SK-N-SH (cell line): ENCODE measurements at regions of chr4 and their contacts with region 1.

Region 1: DNA sequence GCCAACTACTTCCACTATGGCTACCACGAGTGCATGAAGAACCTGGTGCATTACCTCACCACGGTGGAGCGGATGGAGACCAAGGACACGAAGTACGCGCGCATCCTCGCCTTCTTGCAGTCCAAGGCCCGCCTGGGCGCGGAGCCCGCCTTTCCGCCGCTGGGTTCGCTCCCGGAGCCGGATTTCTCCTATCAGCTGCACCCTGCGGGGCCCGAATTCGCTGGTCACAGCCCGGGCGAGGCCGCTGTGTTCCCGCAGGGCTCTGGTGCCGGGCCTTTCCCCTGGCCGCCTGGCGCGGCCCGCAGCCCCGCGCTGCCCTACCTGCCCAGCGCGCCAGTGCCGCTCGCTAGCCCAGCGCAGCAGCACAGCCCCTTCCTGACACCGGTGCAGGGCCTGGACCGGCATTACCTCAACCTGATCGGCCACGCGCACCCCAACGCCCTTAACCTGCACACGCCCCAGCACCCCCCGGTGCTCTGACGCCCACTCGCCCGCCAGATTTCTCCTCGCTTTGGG is 2.1 kb downstream of the HELT start:
- DNase-seq: peak; percentile 48
- H3K4me3 ChIP-seq: no peak overlapping the region
- H3K27ac ChIP-seq: no peak overlapping the region
- H3K4me1 ChIP-seq: no peaks in the 10 kb centered on the region
- H3K27me3 ChIP-seq: peaks cover 49% of the 10 kb centered on the region
- CTCF ChIP-seq: no peak
- EP300 ChIP-seq: no peak
- RAD21 ChIP-seq: no peak

Region 2: GRCh38 chr4:185005216-185005819 is 15.0 kb before region 1 on chr4:
- CTCF ChIA-PET with region 1: interaction called, 12 read pairs
- POLR2A ChIA-PET with region 1: no interaction called
- DNase-seq: peak; percentile 89
- H3K4me3 ChIP-seq: peak overlapping the region; percentile 4 to 35; a peak in 2 of 4 replicates
- H3K27ac ChIP-seq: no peak overlapping the region
- H3K4me1 ChIP-seq: peaks cover 0 to 5% of the 10 kb centered on the region in 2 experiments; a peak in 1 of 4 replicates
- H3K27me3 ChIP-seq: peaks cover 10% of the 10 kb centered on the region; the same call in 1 of the 2 replicates
- CTCF ChIP-seq: peak; percentile 92
- EP300 ChIP-seq: no peak
- RAD21 ChIP-seq: peak; percentile 82

Region 3: GRCh38 chr4:185587427-185588161 is 567.2 kb after region 1 on chr4:
- CTCF ChIA-PET with region 1: no interaction called
- POLR2A ChIA-PET with region 1: no interaction called
- DNase-seq: no peak
- H3K4me3 ChIP-seq: no peak overlapping the region
- H3K27ac ChIP-seq: no peak overlapping the region
- H3K4me1 ChIP-seq: no peaks in the 10 kb centered on the region
- H3K27me3 ChIP-seq: no peaks in the 10 kb centered on the region
- CTCF ChIP-seq: no peak
- EP300 ChIP-seq: no peak
- RAD21 ChIP-seq: no peak